ENCODE measurements at regions of chrX and their contacts with region 1.

Region 1: DNA sequence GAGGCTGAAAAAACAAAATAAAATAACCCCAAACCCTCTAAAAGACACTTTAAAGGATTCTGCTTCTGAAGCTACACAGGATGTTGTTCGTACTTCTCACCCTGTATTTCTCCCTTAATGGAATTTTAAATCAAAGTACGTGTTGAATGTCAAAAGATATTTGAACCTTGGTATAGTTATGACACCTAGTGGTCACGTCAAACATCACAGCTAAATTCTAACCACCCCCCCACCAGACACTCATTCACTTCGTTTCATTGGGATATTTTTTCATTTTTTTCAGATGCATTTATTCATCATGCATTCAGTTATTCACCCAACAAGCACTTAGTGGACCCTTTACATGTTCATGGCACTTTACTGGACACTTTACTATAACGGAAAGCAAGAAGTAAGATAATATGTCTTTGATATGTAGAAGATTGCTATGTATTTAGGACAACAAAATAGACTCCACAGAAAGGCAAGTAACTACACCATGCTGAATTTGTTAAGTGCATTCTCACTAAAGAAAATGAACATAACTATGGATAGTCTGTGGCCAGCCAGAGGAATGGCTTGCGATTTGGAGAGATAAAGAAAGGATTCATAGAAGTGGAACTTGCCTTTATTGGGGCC is 62.5 kb upstream of the GPR174 start:
- DNase-seq: no peak
- H3K4me3 Mint-ChIP-seq: peak overlapping the region; percentile 43
- H3K27ac Mint-ChIP-seq: no peak overlapping the region
- H3K4me1 Mint-ChIP-seq: peaks cover 30% of the 10 kb centered on the region
- H3K27me3 Mint-ChIP-seq: no peaks in the 10 kb centered on the region

Region 2: GRCh38 chrX:78555401-78555980 is 526.5 kb before region 1 on chrX:
- CTCF ChIA-PET with region 1: interaction called, 14 read pairs
- POLR2A ChIA-PET with region 1: no interaction called
- DNase-seq: no peak
- H3K4me3 Mint-ChIP-seq: no peak overlapping the region
- H3K27ac Mint-ChIP-seq: no peak overlapping the region
- H3K4me1 Mint-ChIP-seq: peaks cover 2% of the 10 kb centered on the region
- H3K27me3 Mint-ChIP-seq: no peaks in the 10 kb centered on the region

Region 3: GRCh38 chrX:78931814-78932213 is 150.2 kb before region 1 on chrX:
- CTCF ChIA-PET with region 1: no interaction called
- POLR2A ChIA-PET with region 1: no interaction called
- DNase-seq: no peak
- H3K4me3 Mint-ChIP-seq: no peak overlapping the region
- H3K27ac Mint-ChIP-seq: no peak overlapping the region
- H3K4me1 Mint-ChIP-seq: peaks cover 2% of the 10 kb centered on the region
- H3K27me3 Mint-ChIP-seq: no peaks in the 10 kb centered on the region

Region 4: DNA sequence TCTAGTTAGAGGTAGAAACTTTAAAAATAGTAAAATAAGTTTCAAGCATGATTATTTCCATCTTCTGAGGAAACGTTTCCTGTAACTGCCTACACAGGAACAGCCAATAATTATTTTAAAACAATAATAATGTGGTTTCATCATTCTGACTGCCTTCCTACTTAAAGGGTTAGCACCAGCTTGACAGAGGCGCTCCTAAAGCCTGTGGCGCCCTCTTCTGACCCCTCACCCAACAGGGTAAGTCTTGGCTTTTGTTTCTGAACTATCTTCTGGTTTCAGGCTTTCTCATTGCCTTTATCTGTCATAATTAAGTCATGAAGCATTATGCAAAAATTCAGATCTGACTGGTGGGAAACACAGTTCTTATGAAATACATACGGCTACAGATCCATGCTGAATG is 188.4 kb after region 1 on chrX:
- CTCF ChIA-PET with region 1: interaction called, 11 read pairs
- POLR2A ChIA-PET with region 1: no interaction called
- DNase-seq: peak; percentile 77
- H3K4me3 Mint-ChIP-seq: no peak overlapping the region
- H3K27ac Mint-ChIP-seq: no peak overlapping the region
- H3K4me1 Mint-ChIP-seq: peaks cover 40% of the 10 kb centered on the region
- H3K27me3 Mint-ChIP-seq: no peaks in the 10 kb centered on the region

Measured in activated CD4-positive, alpha-beta memory T cell treated with anti-CD3 and anti-CD28 coated beads, Interleukin-2, amount 10 ng/mL, durations not matched to agents 7 days and 5 days (primary cell).